ENCODE measurements at regions of chr6 and their contacts with region 1.

Region 1: GRCh38 chr6:166402582-166403277 is 20.0 kb upstream of the MPC1 start:
- DNase-seq: no peak
- H3K4me3 Mint-ChIP-seq: no peak overlapping the region
- H3K27ac Mint-ChIP-seq: no peak overlapping the region
- H3K4me1 Mint-ChIP-seq: no peaks in the 10 kb centered on the region
- H3K27me3 Mint-ChIP-seq: peaks cover 8% of the 10 kb centered on the region

Region 2: GRCh38 chr6:166275714-166276166 is 127.0 kb before region 1 on chr6:
- intact Hi-C with region 1: loop called (anchors 1 kb)
- DNase-seq: peak; percentile 95
- H3K4me3 Mint-ChIP-seq: no peak overlapping the region
- H3K27ac Mint-ChIP-seq: no peak overlapping the region
- H3K4me1 Mint-ChIP-seq: peaks cover 3% of the 10 kb centered on the region
- H3K27me3 Mint-ChIP-seq: peaks cover 14% of the 10 kb centered on the region

Region 3: DNA sequence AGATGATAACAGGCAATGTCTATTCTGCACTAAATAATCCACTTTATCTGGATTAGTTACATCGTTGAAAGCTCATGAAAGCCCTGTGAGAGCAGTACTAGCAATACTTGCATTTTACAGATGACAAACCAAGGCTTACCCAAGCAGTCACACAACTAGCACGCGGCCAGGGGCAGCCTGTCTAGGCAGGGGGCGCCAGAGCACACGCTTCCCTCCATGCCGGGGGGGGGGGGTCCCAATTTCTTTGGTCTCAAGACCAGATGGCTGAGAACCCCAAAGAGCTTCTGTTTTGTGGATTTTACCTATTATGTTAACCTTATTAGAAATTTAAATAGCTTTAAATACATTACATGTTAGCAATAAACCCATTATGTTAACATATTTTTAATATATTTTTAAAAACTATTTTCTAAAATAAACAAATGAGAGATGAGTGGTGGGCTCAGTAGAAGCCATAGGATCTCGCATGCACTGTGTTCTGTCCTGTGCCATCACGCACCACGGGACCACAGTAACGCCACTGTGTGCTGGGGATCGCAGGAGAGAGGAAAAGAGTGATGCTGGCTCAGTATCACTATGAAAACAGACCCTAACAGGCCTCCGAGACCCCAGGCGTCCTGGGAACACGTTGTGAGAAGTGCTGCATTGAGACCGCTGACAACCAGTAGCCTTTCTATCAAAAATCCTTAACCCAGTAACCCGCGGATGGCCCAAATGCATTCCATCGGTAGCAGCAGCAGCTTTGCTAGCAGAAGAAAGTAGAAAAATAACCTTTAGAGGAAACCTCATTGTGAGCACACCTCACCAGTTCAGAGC is 89.3 kb before region 1 on chr6:
- intact Hi-C with region 1: loop called (anchors 1 kb)
- DNase-seq: no peak
- H3K4me3 Mint-ChIP-seq: no peak overlapping the region
- H3K27ac Mint-ChIP-seq: no peak overlapping the region
- H3K4me1 Mint-ChIP-seq: no peaks in the 10 kb centered on the region
- H3K27me3 Mint-ChIP-seq: peaks cover 31% of the 10 kb centered on the region

Measured in activated CD4-positive, alpha-beta T cell treated with anti-CD3 and anti-CD28 coated beads, Interleukin-2, amount 10 ng/mL, durations not matched to agents 24 days and 14 days (primary cell).